Naive thymus-derived CD4-positive, alpha-beta T cell (primary cell): ENCODE measurements at regions of chr17 and their contacts with region 1.

Region 1: DNA sequence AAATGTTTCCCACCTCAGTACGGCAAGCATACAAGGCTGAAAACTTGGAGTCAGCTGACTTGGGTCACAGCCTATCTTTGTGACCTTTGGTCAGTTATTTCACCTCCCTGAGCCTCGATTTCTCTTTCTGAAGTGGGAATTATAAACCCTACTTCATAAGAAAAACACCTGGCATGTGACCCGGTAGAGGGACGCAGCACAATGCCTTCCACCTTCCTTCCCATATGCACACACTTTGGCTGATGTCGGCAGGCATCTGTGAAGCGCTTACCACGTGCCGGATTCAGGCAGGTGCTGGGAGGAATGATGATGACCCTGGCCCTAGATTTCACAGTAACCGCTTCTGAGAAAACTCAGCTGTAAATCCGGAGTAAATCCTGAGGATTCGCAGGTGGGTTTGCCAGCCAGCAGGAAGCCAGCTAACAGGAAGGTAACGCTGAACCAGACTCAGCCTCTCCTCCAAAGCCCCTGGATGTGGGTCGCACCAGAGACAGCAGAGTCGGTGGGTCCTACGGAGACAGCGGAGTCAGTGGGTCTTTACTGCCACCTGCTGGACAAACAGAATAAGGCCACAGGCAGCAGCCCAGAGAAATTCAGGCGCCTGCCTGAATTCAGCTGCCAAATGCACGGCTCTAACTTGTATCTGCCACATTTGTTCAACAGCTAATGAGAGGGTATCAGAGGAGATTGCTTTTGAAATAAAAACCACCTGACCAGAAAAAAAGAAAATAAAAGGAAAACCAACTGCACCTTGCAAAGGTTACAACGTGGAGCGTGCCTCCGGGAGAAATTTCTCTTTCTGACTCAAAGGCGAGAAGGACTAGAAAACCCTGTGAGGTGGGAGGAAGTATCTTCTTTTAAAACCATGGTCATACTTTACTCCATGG is 16.6 kb downstream of the COPRS start:
- DNase-seq: peak; percentile 29 to 70 (median 59)
- ATAC-seq: peak; percentile 93
- H3K4me3 ChIP-seq: no peak overlapping the region
- H3K4me3 Mint-ChIP-seq: no peak overlapping the region
- H3K27ac ChIP-seq: no peak overlapping the region
- H3K27ac Mint-ChIP-seq: no peak overlapping the region
- H3K4me1 ChIP-seq: no peaks in the 10 kb centered on the region
- H3K4me1 Mint-ChIP-seq: no peaks in the 10 kb centered on the region
- H3K27me3 ChIP-seq: no peaks in the 10 kb centered on the region
- H3K27me3 Mint-ChIP-seq: peaks cover 0 to 19% (median 11%) of the 10 kb centered on the region in 5 donors

Region 2: DNA sequence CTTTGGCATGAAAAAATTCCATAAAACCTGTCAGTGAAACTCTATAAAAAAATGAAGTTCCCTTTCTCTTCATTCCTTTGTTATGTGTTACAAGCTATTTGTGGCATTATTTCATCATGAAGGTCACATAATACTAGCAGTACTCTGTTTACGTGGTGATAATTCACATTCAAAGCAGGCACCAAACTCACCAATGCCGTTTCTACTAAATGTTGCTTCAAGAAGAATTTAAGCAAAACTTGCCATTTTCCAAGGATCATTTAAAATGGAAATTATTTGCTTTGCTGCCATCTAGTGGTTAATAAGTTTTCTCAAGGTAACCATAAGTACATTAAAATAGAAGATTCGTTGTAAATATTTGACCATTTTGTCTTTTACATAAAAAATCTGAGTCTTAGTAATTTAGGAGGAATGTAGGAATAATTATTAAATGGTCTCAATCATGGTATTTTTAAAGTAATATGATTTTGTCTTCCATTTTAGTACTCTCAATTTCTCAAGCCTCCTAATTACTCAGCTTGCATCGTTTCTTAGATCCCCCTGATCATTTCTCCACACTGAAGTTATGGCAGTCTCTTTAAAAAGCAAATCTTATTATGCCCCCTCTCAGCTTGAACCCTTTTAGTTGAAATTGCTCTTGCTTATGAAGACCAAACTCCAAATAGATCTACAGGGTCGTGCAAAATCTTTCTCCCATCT is 626.2 kb before region 1 on chr17:
- CTCF ChIA-PET with region 1: no interaction called
- POLR2A ChIA-PET with region 1: no interaction called
- intact Hi-C with region 1: loop called in 1 of 2 experiments (anchors 5 kb)
- DNase-seq: peak in 5 of 9 donors; percentile 28 to 40 (median 32)
- ATAC-seq: no peak
- H3K4me3 ChIP-seq: no peak overlapping the region
- H3K4me3 Mint-ChIP-seq: no peak overlapping the region
- H3K27ac ChIP-seq: no peak overlapping the region
- H3K27ac Mint-ChIP-seq: no peak overlapping the region
- H3K4me1 ChIP-seq: no peaks in the 10 kb centered on the region
- H3K4me1 Mint-ChIP-seq: peaks cover 0 to 4% (median 0%) of the 10 kb centered on the region in 7 donors
- H3K27me3 ChIP-seq: no peaks in the 10 kb centered on the region
- H3K27me3 Mint-ChIP-seq: no peaks in the 10 kb centered on the region

Region 3: GRCh38 chr17:31388770-31389661 is 453.4 kb before region 1 on chr17:
- CTCF ChIA-PET with region 1: interaction called, 3 read pairs
- POLR2A ChIA-PET with region 1: no interaction called
- intact Hi-C with region 1: loop called in 1 of 2 experiments (anchors 1 kb)
- DNase-seq: peak in 7 of 9 donors; percentile 15 to 52 (median 38)
- ATAC-seq: peak; percentile 67
- H3K4me3 ChIP-seq: no peak overlapping the region
- H3K4me3 Mint-ChIP-seq: peak overlapping the region in 2 of 10 donors; percentile 21 to 56
- H3K27ac ChIP-seq: no peak overlapping the region
- H3K27ac Mint-ChIP-seq: no peak overlapping the region
- H3K4me1 ChIP-seq: no peaks in the 10 kb centered on the region
- H3K4me1 Mint-ChIP-seq: peaks cover 10 to 17% (median 16%) of the 10 kb centered on the region in 7 donors
- H3K27me3 ChIP-seq: no peaks in the 10 kb centered on the region
- H3K27me3 Mint-ChIP-seq: peaks cover 22 to 50% (median 28%) of the 10 kb centered on the region in 5 donors

Region 4: DNA sequence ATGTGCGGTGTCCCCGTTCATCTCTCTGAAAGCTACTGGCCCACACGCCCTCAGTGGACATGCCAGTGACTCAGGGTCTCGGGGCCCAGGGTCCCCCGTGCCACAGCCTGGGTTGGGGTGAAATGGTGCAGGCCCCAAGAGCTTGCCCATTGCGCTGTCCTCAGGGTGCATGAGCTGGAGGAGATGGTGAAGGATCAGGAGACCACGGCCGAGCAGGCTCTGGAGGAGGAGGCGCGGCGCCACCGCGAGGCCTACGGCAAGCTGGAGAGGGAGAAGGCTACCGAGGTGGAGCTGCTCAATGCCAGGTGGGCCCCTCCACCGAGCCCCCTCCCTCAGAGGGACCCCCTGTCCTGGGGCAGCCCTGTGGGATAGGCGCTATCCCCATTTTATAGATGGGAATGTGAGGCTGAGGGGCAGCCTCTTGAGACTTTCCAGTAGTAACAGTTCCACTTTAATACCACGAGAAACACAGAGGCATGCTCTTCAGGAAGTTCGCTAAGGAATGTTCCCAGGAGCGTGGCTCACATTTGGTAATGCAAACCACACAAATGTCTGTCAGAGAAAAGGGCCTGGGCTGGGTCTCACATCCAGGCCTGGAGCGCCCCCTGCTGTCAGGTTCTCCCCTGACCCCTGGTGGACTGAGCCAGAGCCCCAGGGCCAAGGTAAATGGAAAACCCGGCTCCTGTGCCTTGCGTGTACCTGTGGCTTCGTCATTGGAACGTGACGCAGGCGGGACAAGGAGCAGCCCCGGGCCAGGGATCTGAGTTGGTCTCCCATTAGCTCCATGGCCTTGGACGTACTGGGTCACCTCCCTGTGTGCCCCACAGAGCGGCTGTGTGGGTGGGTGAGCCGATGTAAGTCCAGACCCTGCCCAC is 317.3 kb before region 1 on chr17:
- CTCF ChIA-PET with region 1: no interaction called
- POLR2A ChIA-PET with region 1: no interaction called
- intact Hi-C with region 1: loop called (anchors 2 to 5 kb)
- DNase-seq: peak; percentile 67 to 89 (median 77)
- ATAC-seq: peak; percentile 87
- H3K4me3 ChIP-seq: no peak overlapping the region
- H3K4me3 Mint-ChIP-seq: no peak overlapping the region
- H3K27ac ChIP-seq: no peak overlapping the region
- H3K27ac Mint-ChIP-seq: peak overlapping the region in 1 of 9 donors; percentile 11
- H3K4me1 ChIP-seq: no peaks in the 10 kb centered on the region
- H3K4me1 Mint-ChIP-seq: peaks cover 0 to 2% (median 0%) of the 10 kb centered on the region in 7 donors
- H3K27me3 ChIP-seq: no peaks in the 10 kb centered on the region
- H3K27me3 Mint-ChIP-seq: no peaks in the 10 kb centered on the region

Region 5: GRCh38 chr17:31558748-31559644 is 283.4 kb before region 1 on chr17:
- CTCF ChIA-PET with region 1: interaction called, 3 read pairs
- POLR2A ChIA-PET with region 1: no interaction called
- intact Hi-C with region 1: loop called (anchors 1 to 5 kb)
- DNase-seq: peak in 8 of 9 donors; percentile 22 to 74 (median 29)
- ATAC-seq: peak; percentile 93
- H3K4me3 ChIP-seq: peak overlapping the region; percentile 42
- H3K4me3 Mint-ChIP-seq: peak overlapping the region; percentile 50 to 82 (median 74)
- H3K27ac ChIP-seq: peak overlapping the region; percentile 51
- H3K27ac Mint-ChIP-seq: no peak overlapping the region
- H3K4me1 ChIP-seq: peaks cover 0 to 6% of the 10 kb centered on the region in 2 donors
- H3K4me1 Mint-ChIP-seq: peaks cover 7 to 29% (median 17%) of the 10 kb centered on the region in 7 donors
- H3K27me3 ChIP-seq: no peaks in the 10 kb centered on the region
- H3K27me3 Mint-ChIP-seq: peaks cover 0 to 39% (median 0%) of the 10 kb centered on the region in 5 donors